Activated CD8-positive, alpha-beta T cell treated with anti-CD3 and anti-CD28 coated beads, Interleukin-2, amount 10 ng/mL, durations not matched to agents 7 days and 5 days (primary cell): ENCODE measurements at regions of chr4 and their contacts with region 1.

Region 1: GRCh38 chr4:154506253-154506652 is 14.7 kb upstream of the DCHS2 start:
- DNase-seq: no peak
- ATAC-seq: no peak
- H3K4me3 Mint-ChIP-seq: no peak overlapping the region
- H3K27ac Mint-ChIP-seq: no peak overlapping the region
- H3K4me1 Mint-ChIP-seq: no peaks in the 10 kb centered on the region
- H3K27me3 Mint-ChIP-seq: peaks cover 33% of the 10 kb centered on the region

Region 2: GRCh38 chr4:154332681-154333421 is 173.4 kb before region 1 on chr4:
- CTCF ChIA-PET with region 1: interaction called, 16 read pairs
- POLR2A ChIA-PET with region 1: no interaction called
- DNase-seq: peak; percentile 60
- ATAC-seq: peak; percentile 91
- H3K4me3 Mint-ChIP-seq: peak overlapping the region; percentile 61
- H3K27ac Mint-ChIP-seq: no peak overlapping the region
- H3K4me1 Mint-ChIP-seq: peaks cover 10% of the 10 kb centered on the region
- H3K27me3 Mint-ChIP-seq: peaks cover 29% of the 10 kb centered on the region

Region 3: GRCh38 chr4:154691229-154691628 is 185.0 kb after region 1 on chr4:
- CTCF ChIA-PET with region 1: no interaction called
- POLR2A ChIA-PET with region 1: no interaction called
- DNase-seq: no peak
- ATAC-seq: no peak
- H3K4me3 Mint-ChIP-seq: no peak overlapping the region
- H3K27ac Mint-ChIP-seq: no peak overlapping the region
- H3K4me1 Mint-ChIP-seq: no peaks in the 10 kb centered on the region
- H3K27me3 Mint-ChIP-seq: no peaks in the 10 kb centered on the region